BJ (cell line): ENCODE measurements at regions of chr6 and their contacts with region 1.

Region 1: DNA sequence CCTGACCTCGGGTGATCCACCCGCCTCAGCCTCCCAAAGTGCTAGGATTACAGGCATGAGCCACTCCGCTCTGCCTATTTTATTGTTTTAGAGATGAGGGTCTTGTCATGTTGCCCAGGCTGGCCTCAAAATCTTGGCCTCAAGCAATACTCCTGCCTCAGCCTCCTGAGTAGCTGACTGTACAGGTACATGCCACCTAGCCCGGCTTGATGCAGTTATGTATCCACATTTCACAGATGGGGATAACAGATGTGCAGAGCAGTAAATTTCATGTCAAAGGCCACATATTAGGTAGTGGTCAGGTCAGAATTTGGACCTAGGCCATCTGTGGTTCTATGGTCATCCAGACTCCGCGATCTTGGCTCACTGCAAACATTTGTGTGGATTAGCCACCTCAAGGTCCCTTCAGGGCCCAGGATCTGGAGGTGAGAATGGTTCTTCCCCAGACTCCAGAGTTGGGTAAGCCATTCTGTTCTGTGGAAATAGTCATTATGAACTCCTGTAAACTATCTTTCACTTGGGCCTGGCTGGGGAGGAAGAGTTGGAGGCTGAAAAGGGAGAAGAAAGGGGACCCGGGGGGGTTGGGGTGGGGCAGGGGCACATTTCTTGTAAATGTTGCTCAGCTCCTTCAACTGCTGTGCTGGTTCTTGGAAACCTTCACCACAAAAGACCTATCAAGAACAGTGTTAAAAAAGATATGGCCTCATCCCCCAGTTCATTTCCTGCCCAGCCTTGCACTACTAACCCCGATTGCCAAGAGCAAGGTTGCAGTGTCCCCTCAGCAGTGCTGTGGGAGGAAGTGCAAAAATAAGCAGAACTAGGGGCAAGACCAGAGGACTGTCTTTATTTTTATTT is 13.0 kb downstream of the PIM1 start:
- DNase-seq: no peak
- H3K4me3 ChIP-seq: no peak overlapping the region
- H3K27me3 ChIP-seq: no peaks in the 10 kb centered on the region; the same call in 1 of the 2 replicates
- CTCF ChIP-seq: no peak

Region 2: DNA sequence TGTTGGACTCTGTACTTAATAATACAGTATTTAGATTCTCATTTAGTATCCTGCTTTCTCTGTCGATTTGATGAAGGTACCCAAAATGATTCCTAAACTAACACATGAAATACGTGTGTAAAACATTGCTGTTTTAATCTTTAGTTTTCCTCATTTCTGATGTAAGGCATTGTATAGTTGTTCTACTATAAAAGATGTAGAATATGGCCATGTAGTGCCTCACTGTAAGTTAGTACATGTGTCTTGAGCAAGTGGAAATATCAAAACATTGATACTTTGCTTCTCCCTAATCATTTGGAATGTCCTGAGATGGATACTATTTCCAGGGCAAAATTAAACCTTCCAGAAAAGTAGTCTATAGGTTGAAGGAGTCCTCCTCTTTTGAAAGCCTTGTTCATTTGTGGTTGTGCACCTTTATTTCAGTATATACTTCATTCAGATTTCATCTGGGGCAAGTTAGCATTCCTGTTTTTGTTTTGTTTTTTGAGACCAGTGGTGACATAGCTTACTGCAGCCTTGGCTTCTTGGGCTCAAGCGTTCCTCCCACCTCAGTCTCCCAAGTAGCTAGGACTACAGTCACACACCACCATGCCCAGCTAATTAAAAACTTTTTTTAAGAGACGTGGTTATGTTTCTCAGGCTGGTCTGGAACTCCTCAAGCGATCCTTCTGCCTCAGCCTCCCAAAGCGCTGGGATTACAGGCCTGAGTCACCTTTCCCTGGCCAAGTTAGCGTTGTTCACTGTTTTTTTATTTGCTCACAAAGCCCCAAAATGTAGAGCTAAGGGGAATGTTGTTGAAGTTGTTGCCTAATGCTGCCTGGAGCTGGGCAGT is 577.2 kb before region 1 on chr6:
- CTCF ChIA-PET with region 1: no interaction called
- POLR2A ChIA-PET with region 1: interaction called, 15 read pairs
- DNase-seq: no peak
- H3K4me3 ChIP-seq: no peak overlapping the region
- H3K27me3 ChIP-seq: no peaks in the 10 kb centered on the region
- CTCF ChIP-seq: peak; percentile 14; the same call in 1 of the 2 replicates

Region 3: DNA sequence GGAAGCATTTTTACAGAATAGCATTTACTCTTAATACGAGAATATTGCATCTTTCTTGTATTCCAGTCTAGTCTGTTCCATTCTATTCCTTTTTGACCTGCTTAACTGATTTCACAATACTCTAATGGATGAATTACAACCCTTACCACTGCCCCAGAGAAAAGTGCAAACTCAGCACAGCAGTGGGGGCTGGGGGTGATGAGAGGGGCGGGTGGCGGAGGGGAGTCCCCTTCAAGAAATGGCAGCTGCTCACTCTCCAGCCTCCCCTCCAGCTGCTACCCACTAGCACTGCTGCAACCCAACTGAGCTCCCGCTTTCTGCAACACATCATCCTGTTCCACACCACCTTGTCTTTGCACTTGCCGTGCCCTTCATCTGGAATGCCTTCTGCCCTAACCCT is 17.1 kb after region 1 on chr6:
- CTCF ChIA-PET with region 1: no interaction called
- POLR2A ChIA-PET with region 1: no interaction called
- DNase-seq: no peak
- H3K4me3 ChIP-seq: no peak overlapping the region
- H3K27me3 ChIP-seq: peaks cover 10% of the 10 kb centered on the region
- CTCF ChIP-seq: no peak

Region 4: DNA sequence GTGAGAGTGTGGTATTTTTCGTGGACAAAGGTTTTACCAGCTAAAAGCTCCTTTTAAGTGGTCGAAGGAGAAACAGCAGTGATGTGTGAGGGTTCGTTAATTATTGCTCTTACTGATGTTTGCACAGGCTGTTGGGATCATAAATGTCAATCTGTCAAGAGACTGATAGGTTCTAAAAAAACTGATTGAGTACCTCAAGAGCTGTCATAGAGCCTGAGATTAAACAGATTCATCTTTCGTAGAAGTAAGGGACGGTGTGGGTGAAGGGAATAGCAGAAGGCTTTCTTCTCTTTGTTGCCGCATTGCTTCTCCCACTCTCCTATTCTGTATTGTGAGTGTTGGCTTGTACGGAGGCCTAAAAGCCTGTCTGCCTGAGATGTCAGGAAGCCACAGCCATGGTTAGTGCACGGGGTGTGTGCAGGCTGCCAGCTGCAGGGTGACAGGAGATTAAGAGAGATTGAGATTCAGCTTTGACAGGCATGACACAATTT is 927.6 kb after region 1 on chr6:
- CTCF ChIA-PET with region 1: no interaction called
- POLR2A ChIA-PET with region 1: no interaction called
- DNase-seq: no peak
- H3K4me3 ChIP-seq: no peak overlapping the region
- H3K27me3 ChIP-seq: no peaks in the 10 kb centered on the region
- CTCF ChIP-seq: no peak